ENCODE measurements at regions of chr10 and their contacts with region 1.

Region 1: DNA sequence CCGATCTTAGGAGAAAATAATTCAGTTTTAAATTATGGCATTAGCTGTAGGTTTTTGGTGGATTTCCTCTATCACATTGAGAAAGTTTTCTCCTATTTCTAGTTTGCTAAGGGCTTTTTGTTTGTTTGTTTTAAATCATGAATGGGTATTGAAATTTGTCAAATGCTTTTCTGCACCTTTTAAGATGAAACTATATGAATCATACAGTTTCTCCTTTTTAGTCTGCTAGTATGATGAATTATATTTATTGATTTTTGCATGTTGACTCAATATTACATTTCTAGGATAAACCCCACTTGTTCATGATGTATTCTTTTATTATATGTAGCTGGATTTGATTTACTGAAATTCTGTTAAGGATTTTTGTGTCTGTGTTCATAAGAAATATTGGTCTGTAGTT is 70.3 kb upstream of the PIP4K2A start:
- DNase-seq: no peak
- ATAC-seq: no peak
- H3K4me3 Mint-ChIP-seq: no peak overlapping the region
- H3K27ac Mint-ChIP-seq: no peak overlapping the region
- H3K4me1 Mint-ChIP-seq: no peaks in the 10 kb centered on the region
- H3K27me3 Mint-ChIP-seq: no peaks in the 10 kb centered on the region
- CTCF ChIP-seq: no peak

Region 2: GRCh38 chr10:22742678-22743077 is 42.0 kb before region 1 on chr10:
- CTCF ChIA-PET with region 1: no interaction called
- POLR2A ChIA-PET with region 1: no interaction called
- intact Hi-C with region 1: loop called (anchors 1 kb)
- DNase-seq: no peak
- ATAC-seq: peak; percentile 100
- H3K4me3 Mint-ChIP-seq: peak overlapping the region; percentile 8
- H3K27ac Mint-ChIP-seq: peak overlapping the region; percentile 54
- H3K4me1 Mint-ChIP-seq: peaks cover 23% of the 10 kb centered on the region
- H3K27me3 Mint-ChIP-seq: no peaks in the 10 kb centered on the region
- CTCF ChIP-seq: no peak

Region 3: GRCh38 chr10:22765660-22766547 is 18.8 kb before region 1 on chr10:
- CTCF ChIA-PET with region 1: no interaction called
- POLR2A ChIA-PET with region 1: no interaction called
- intact Hi-C with region 1: no loop called
- DNase-seq: no peak
- ATAC-seq: peak; percentile 68
- H3K4me3 Mint-ChIP-seq: peak overlapping the region; percentile 51
- H3K27ac Mint-ChIP-seq: peak overlapping the region; percentile 61
- H3K4me1 Mint-ChIP-seq: peaks cover 48% of the 10 kb centered on the region
- H3K27me3 Mint-ChIP-seq: no peaks in the 10 kb centered on the region
- CTCF ChIP-seq: no peak

Region 4: DNA sequence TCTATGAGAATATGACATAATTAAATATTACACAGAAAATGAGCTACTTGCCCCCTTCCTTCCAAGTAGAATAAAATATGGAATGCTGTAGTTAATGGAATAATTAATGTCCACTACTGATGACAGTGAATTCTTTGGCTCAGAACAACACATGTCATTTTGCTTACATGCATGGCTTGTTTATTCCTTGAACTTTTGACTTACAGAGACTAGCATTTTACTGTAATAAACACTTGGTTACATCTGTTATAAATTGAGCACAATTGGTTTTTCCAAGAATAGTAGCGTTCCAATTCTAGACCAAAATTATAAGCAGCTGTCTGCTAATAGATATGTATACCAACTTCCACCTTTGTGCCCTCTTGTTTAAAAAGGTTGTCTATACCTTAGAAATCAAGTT is 940.9 kb after region 1 on chr10:
- CTCF ChIA-PET with region 1: no interaction called
- POLR2A ChIA-PET with region 1: no interaction called
- intact Hi-C with region 1: no loop called
- DNase-seq: no peak
- ATAC-seq: no peak
- H3K4me3 Mint-ChIP-seq: no peak overlapping the region
- H3K27ac Mint-ChIP-seq: no peak overlapping the region
- H3K4me1 Mint-ChIP-seq: no peaks in the 10 kb centered on the region
- H3K27me3 Mint-ChIP-seq: no peaks in the 10 kb centered on the region
- CTCF ChIP-seq: no peak

Measured in activated B cell treated with CpG ODN at 0.5 μM for 24 hours (primary cell).